Activated naive CD8-positive, alpha-beta T cell treated with anti-CD3 and anti-CD28 coated beads, Interleukin-2, amount 10 ng/mL, durations not matched to agents 7 days and 5 days (primary cell): ENCODE measurements at regions of chr7 and their contacts with region 1.

Region 1: GRCh38 chr7:32891800-32892520 is 400 bp upstream of the KBTBD2 start:
- DNase-seq: peak; percentile 95
- ATAC-seq: peak; percentile 65
- H3K4me3 Mint-ChIP-seq: peak overlapping the region; percentile 86
- H3K27ac Mint-ChIP-seq: peak overlapping the region; percentile 93
- H3K4me1 Mint-ChIP-seq: peaks cover 41% of the 10 kb centered on the region
- H3K27me3 Mint-ChIP-seq: peaks cover 8% of the 10 kb centered on the region

Region 2: GRCh38 chr7:32846701-32847100 is 45.3 kb before region 1 on chr7:
- POLR2A ChIA-PET with region 1: interaction called, 11 read pairs
- DNase-seq: peak; percentile 90
- ATAC-seq: peak; percentile 100
- H3K4me3 Mint-ChIP-seq: peak overlapping the region; percentile 5
- H3K27ac Mint-ChIP-seq: no peak overlapping the region
- H3K4me1 Mint-ChIP-seq: peaks cover 10% of the 10 kb centered on the region
- H3K27me3 Mint-ChIP-seq: peaks cover 41% of the 10 kb centered on the region

Region 3: DNA sequence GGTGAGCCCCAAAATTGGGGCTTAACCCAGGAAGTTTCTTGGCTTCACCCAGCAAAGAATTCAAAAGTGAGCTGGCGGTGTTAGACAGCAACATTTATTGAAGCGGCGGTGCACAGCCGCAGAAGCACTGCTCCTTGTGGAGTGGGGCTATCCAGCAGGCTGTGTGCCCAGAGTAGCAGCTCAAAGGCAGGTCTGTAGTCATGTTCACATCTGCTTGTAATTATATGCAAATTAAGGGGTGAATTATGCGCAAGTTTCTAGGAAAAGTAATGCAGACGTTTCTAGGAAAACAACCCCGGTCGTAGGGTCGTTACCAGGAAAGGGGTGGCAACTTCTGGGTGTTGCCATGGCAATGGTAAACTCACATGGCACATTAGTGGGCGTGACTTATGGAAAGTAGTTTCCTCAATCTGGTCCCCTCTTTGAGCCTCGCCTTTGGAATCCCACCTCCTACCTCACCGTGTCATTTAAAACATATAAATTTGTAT is 13.3 kb after region 1 on chr7:
- POLR2A ChIA-PET with region 1: interaction called, 168 read pairs
- DNase-seq: peak; percentile 67
- ATAC-seq: peak; percentile 93
- H3K4me3 Mint-ChIP-seq: peak overlapping the region; percentile 85
- H3K27ac Mint-ChIP-seq: peak overlapping the region; percentile 96
- H3K4me1 Mint-ChIP-seq: peaks cover 9% of the 10 kb centered on the region
- H3K27me3 Mint-ChIP-seq: no peaks in the 10 kb centered on the region

Region 4: DNA sequence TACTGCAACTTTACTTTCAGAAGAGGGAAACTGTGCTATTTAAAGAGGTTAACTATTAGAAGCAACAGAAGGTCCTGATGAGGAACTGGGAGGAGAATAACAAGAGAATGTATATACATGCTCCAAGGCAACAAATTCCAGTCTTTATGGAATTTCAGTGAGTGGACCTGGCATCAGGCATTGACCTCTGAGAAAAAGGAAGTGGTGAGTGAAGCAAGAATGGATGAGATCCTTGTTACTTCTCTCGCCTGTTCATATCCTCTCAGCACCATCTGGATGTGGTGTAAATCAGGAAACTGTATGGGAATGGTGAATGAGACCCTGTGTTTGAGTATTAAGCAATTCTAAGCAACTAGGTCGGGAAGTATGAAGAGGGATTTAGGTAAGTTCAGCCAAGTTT is 29.9 kb after region 1 on chr7:
- POLR2A ChIA-PET with region 1: no interaction called
- DNase-seq: no peak
- ATAC-seq: no peak
- H3K4me3 Mint-ChIP-seq: no peak overlapping the region
- H3K27ac Mint-ChIP-seq: no peak overlapping the region
- H3K4me1 Mint-ChIP-seq: peaks cover 2% of the 10 kb centered on the region
- H3K27me3 Mint-ChIP-seq: peaks cover 2% of the 10 kb centered on the region

Region 5: DNA sequence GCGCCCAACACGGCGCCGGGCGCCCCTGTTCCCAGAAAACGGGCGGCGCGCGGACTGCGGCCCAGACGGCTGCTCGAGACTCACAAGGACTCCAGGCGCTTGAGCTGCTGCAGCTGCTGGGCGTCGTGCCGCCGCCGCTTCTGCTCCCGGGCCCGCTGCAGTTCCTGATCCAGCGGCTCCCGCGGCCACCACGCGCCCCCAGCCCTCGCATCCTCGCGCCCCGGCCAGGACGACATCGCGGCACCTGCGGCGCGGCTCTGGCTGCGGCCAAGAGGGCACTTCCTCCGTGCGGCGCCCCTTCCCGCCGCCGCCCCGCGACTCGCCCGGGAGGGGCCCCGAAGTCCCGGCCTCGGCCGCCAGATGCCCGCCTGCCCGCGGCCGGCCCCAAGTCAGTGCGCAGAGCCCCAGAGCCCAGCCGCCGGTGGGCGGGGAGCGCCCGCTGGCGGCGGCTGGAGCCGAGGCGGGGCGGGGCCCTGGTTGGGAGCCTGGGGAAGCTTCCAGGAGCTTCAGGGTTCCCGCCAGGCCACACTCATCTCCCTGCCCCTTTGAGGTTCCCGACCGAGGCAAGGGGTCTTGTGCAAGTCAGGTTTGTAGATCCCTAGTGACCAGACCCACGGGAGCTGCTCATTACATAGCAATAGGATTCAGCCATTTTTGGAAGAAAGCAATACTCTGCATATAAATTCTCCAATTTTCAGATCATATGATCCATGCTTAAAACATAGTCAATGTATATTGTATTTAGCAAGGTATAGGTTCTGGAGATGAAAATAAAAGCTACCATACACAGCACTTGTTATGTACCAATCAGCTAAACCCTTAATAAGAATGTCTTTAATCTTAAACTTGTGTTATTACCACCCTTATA is 51.1 kb after region 1 on chr7:
- POLR2A ChIA-PET with region 1: interaction called, 23 read pairs
- DNase-seq: peak; percentile 78
- ATAC-seq: peak; percentile 89
- H3K4me3 Mint-ChIP-seq: peak overlapping the region; percentile 71
- H3K27ac Mint-ChIP-seq: no peak overlapping the region
- H3K4me1 Mint-ChIP-seq: peaks cover 10% of the 10 kb centered on the region
- H3K27me3 Mint-ChIP-seq: peaks cover 16% of the 10 kb centered on the region

Region 6: DNA sequence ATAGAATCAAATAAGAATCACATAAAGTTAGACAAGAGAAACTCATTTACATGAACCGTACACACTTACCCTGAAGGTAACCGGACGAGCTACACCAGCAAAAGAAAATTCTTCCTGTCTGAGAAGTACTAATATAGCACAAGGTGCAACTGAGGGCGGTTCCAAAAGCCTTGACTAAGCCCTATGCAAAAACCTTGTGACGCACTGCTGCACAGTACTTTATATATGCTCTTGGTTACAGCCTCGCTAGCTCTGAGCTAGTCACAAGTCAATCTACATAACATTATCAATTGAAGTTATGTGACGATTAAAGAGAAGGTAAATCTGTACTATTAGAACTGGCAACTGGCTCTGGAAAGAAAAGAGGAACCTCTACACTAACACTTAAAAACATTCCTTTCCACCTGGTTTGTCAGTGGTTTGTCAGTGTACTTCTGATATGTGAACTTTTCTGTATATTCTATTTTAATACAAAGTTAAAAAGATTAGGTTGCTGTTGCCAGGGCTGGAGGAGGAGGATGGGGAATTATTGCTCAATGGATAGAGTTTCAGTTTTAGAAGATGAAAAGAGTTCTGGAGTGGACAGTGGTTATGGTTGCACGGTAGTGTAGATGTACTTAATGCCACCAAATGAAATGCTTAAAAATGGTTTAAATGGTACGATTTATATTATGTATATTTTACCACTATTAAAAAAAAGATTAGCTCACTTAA is 149.0 kb after region 1 on chr7:
- POLR2A ChIA-PET with region 1: interaction called, 27 read pairs
- DNase-seq: no peak
- ATAC-seq: peak; percentile 99
- H3K4me3 Mint-ChIP-seq: peak overlapping the region; percentile 87
- H3K27ac Mint-ChIP-seq: peak overlapping the region; percentile 72
- H3K4me1 Mint-ChIP-seq: peaks cover 28% of the 10 kb centered on the region
- H3K27me3 Mint-ChIP-seq: no peaks in the 10 kb centered on the region

Region 7: DNA sequence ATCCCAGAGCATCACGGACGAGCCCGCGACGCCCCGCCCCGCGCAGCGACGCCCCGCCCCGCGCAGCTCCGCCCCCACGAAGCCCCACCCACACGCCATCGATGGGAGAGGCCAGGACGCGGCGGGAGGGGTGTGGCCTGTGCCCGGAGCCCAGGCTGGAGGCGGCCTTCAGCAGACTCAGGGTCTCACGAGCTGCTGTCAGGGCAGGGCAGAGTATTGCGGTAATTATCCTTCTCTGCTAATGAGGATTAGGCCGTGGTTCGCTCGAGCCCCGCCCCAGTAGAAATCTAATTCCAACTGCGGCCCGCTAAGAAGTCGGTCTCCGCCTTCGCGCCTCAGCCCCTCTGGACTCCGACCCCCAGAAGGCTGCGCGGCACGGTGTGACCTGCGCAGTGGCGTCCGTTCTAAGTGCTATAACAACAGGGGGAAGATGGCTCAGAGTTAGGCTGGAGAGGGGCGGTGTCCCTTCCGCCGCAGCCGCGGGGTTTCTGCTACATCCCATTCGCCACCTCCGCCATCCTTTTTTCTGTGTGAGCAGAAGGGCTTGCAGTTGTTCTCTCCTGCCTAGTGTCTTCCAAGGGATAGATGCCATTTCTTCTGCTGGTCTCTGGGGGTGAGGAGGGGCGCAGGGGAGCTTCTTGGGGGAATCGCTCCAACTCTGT is 171.0 kb after region 1 on chr7:
- POLR2A ChIA-PET with region 1: interaction called, 32 read pairs
- DNase-seq: peak; percentile 95
- ATAC-seq: peak; percentile 96
- H3K4me3 Mint-ChIP-seq: peak overlapping the region; percentile 95
- H3K27ac Mint-ChIP-seq: peak overlapping the region; percentile 95
- H3K4me1 Mint-ChIP-seq: peaks cover 24% of the 10 kb centered on the region
- H3K27me3 Mint-ChIP-seq: peaks cover 10% of the 10 kb centered on the region

Region 8: GRCh38 chr7:33109005-33109757 is 217.2 kb after region 1 on chr7 and contains the start of gene RP9:
- POLR2A ChIA-PET with region 1: interaction called, 22 read pairs
- DNase-seq: peak; percentile 89
- ATAC-seq: peak; percentile 84
- H3K4me3 Mint-ChIP-seq: peak within 1 kb of the TSS; percentile 85
- H3K27ac Mint-ChIP-seq: peak within 1 kb of the TSS; percentile 77
- H3K4me1 Mint-ChIP-seq: peaks cover 19% of the 10 kb centered on the region
- H3K27me3 Mint-ChIP-seq: peaks cover 16% of the 10 kb centered on the region
- total RNA-seq, gene RP9: 12.8 to 13.6 TPM